Activated naive CD4-positive, alpha-beta T cell treated with anti-CD3 and anti-CD28 coated beads, Interleukin-2, amount 10 ng/mL, durations not matched to agents 7 days and 5 days (primary cell): ENCODE measurements at regions of chrX and their contacts with region 1.

Region 1: DNA sequence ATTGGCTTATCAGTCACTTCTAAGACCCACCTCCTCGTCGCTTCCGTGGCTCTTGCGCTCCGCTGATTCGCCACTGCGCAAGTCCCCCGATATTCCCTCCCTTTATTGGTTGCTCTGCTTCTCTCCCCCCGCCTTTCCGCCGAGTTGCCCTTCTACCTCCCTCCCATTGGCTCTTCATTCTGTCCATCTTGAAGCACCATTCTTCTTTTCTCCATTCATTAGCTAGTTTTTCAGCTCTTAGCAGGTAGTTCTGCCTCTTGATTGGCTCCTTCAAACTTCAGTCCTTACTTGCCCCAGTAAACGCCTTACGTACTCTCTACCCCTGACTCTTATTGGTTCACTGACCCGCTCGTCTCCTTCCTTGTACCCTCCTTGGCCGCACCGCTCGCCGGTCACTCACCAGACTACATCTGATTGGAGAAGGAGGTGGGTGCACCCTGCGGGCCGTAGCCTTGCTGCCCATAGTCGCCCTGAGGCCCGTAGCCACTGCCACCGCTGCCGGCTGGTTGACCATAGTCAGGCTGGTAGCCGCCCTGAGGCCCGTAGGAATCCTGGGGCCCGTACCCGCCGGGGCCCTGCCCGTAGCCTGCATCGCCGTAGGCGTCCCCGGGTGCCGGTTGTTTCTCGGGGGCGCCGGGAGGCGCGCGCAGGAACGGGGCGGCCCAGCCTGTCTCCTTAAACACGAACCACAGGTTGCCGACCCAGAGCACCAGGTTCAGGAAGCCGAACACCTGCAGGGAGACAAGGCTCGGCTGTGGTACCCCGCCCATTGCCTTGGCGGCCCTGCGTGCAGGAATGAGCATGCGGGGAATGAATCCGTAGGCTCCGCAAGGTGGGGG is 5.1 kb upstream of the PRICKLE3 start:
- DNase-seq: peak; percentile 90
- H3K4me3 Mint-ChIP-seq: peak overlapping the region; percentile 88
- H3K27ac Mint-ChIP-seq: peak overlapping the region; percentile 89
- H3K4me1 Mint-ChIP-seq: peaks cover 49% of the 10 kb centered on the region
- H3K27me3 Mint-ChIP-seq: no peaks in the 10 kb centered on the region

Region 2: GRCh38 chrX:48606091-48606490 is 585.2 kb before region 1 on chrX:
- CTCF ChIA-PET with region 1: no interaction called
- DNase-seq: no peak
- H3K4me3 Mint-ChIP-seq: no peak overlapping the region
- H3K27ac Mint-ChIP-seq: no peak overlapping the region
- H3K4me1 Mint-ChIP-seq: no peaks in the 10 kb centered on the region
- H3K27me3 Mint-ChIP-seq: no peaks in the 10 kb centered on the region

Region 3: GRCh38 chrX:49172280-49172780 is 18.9 kb before region 1 on chrX:
- CTCF ChIA-PET with region 1: interaction called, 12 read pairs
- DNase-seq: peak; percentile 82
- H3K4me3 Mint-ChIP-seq: peak overlapping the region; percentile 81
- H3K27ac Mint-ChIP-seq: peak overlapping the region; percentile 87
- H3K4me1 Mint-ChIP-seq: peaks cover 51% of the 10 kb centered on the region
- H3K27me3 Mint-ChIP-seq: no peaks in the 10 kb centered on the region

Region 4: DNA sequence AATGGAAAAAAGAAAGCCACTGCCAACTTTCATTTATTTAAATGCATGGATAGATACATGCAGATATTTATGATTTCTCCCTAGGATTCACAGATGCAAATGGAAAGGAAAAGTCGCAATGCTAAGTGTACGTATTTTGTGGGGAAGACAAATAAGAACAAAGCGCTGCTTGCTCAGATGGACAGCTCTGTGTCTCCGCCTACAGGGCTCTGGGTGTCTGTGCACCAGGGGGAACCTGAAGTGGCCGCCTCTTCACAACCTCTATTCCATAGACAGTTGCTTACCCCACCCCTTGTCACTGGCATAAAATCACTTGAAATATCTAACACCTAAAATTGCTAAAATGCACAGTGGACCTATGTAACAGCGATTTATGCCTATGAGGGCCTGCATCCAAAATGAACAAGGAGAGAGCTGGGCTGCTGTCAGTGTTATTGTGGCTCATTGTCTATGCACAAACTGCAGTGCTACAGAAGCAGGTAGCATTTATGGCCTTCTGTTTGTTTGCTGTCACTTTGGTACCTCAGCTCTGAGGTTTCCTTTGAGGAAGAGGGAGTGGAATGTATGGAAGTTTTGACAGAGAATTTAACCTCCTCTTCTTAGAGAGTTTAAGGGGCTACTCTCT is 563.1 kb after region 1 on chrX:
- CTCF ChIA-PET with region 1: interaction called, 12 read pairs
- DNase-seq: peak; percentile 65
- H3K4me3 Mint-ChIP-seq: no peak overlapping the region
- H3K27ac Mint-ChIP-seq: no peak overlapping the region
- H3K4me1 Mint-ChIP-seq: peaks cover 4% of the 10 kb centered on the region
- H3K27me3 Mint-ChIP-seq: peaks cover 17% of the 10 kb centered on the region